Activated CD4-positive, alpha-beta memory T cell treated with anti-CD3 and anti-CD28 coated beads, Interleukin-2, amount 10 ng/mL, durations not matched to agents 7 days and 5 days (primary cell): ENCODE measurements at regions of chr1 and their contacts with region 1.

Region 1: GRCh38 chr1:63327417-63328139 is 5.2 kb downstream of the FOXD3 start:
- DNase-seq: peak; percentile 63
- H3K4me3 Mint-ChIP-seq: peak overlapping the region; percentile 11
- H3K27ac Mint-ChIP-seq: peak overlapping the region; percentile 21
- H3K4me1 Mint-ChIP-seq: peaks cover 39% of the 10 kb centered on the region
- H3K27me3 Mint-ChIP-seq: peaks cover 75% of the 10 kb centered on the region

Region 2: GRCh38 chr1:63316984-63317816 is 10.4 kb before region 1 on chr1:
- CTCF ChIA-PET with region 1: interaction called, 15 read pairs
- POLR2A ChIA-PET with region 1: interaction called, 12 read pairs
- DNase-seq: peak; percentile 69
- H3K4me3 Mint-ChIP-seq: peak overlapping the region; percentile 61
- H3K27ac Mint-ChIP-seq: no peak overlapping the region
- H3K4me1 Mint-ChIP-seq: peaks cover 41% of the 10 kb centered on the region
- H3K27me3 Mint-ChIP-seq: peaks cover 68% of the 10 kb centered on the region